ENCODE measurements at regions of chr2 and their contacts with region 1.

Region 1: GRCh38 chr2:108927936-108928659 is 60.9 kb downstream of the EDAR start:
- DNase-seq: peak; percentile 16
- H3K4me3 ChIP-seq: no peak overlapping the region
- H3K27ac ChIP-seq: no peak overlapping the region
- H3K27me3 ChIP-seq: peaks cover 64% of the 10 kb centered on the region
- CTCF ChIP-seq: peak; percentile 93

Region 2: DNA sequence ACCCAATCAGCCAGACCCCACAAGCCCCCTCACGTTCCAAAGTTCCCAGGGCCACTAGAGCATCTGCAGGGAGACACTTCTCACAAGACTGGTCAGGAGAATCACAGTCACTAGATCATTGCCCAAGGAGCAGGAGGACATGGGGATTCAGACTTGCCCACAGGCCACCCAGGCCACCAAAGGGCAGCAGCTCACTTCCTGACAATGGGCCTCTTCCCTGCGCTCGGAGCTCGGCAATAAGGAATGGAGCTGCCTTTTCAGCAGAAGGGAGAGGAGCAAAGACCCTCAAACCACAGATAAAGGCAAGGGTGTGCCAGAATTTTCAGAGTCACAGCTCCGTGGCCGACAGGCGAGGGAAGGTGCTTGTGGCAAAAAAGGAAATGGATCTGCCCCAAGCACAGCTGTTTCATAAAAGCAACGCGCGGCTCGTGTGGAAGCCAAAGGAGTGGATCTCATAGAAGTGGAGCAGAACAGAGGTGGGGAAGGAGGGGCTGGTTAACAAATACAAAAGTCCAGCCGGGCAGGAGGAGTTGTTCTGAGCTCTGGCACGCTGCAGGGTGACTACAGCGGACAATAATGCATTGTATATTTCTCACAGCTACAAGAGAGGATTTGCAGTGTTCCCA is 11.2 kb before region 1 on chr2:
- CTCF ChIA-PET with region 1: interaction called, 16 read pairs
- POLR2A ChIA-PET with region 1: no interaction called
- DNase-seq: peak; percentile 13
- H3K4me3 ChIP-seq: no peak overlapping the region
- H3K27ac ChIP-seq: no peak overlapping the region
- H3K27me3 ChIP-seq: peaks cover 42% of the 10 kb centered on the region
- CTCF ChIP-seq: no peak

Region 3: GRCh38 chr2:108978709-108979111 is 50.6 kb after region 1 on chr2:
- CTCF ChIA-PET with region 1: no interaction called
- POLR2A ChIA-PET with region 1: no interaction called
- DNase-seq: no peak
- H3K4me3 ChIP-seq: no peak overlapping the region
- H3K27ac ChIP-seq: no peak overlapping the region
- H3K27me3 ChIP-seq: peaks cover 60% of the 10 kb centered on the region
- CTCF ChIP-seq: no peak

Region 4: DNA sequence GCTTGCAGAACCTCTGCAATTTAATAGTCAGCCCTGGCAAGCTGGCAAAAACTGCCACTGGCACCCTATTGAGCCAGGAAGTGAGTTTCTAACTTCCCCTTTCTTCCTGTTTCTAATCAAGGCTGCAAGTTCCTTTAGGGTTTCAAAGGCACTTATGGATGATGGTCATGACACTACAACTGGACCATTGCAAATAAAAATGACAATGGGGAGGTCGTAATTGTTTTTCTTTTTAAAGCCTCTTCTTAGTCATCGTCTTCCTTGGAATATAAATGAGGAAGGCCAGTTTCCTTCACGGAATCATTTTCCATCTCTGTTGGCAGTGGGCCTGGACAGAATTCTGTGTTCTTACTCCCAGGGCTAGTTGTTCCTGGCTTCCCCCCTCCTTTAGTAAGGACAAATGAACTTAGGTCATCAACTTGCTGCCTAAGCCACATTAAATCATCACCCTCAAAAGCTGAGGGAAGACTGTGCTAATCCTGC is 236.7 kb after region 1 on chr2:
- CTCF ChIA-PET with region 1: no interaction called
- POLR2A ChIA-PET with region 1: no interaction called
- DNase-seq: no peak
- H3K4me3 ChIP-seq: no peak overlapping the region
- H3K27ac ChIP-seq: peak overlapping the region; percentile 59
- H3K27me3 ChIP-seq: no peaks in the 10 kb centered on the region
- CTCF ChIP-seq: no peak

Region 5: GRCh38 chr2:109201465-109202327 is 273.6 kb after region 1 on chr2:
- CTCF ChIA-PET with region 1: no interaction called
- POLR2A ChIA-PET with region 1: no interaction called
- DNase-seq: no peak
- H3K4me3 ChIP-seq: no peak overlapping the region
- H3K27ac ChIP-seq: no peak overlapping the region
- H3K27me3 ChIP-seq: no peaks in the 10 kb centered on the region
- CTCF ChIP-seq: no peak

Measured in AG04450 (cell line).